ENCODE measurements at regions of chr5 and their contacts with region 1.

Region 1: DNA sequence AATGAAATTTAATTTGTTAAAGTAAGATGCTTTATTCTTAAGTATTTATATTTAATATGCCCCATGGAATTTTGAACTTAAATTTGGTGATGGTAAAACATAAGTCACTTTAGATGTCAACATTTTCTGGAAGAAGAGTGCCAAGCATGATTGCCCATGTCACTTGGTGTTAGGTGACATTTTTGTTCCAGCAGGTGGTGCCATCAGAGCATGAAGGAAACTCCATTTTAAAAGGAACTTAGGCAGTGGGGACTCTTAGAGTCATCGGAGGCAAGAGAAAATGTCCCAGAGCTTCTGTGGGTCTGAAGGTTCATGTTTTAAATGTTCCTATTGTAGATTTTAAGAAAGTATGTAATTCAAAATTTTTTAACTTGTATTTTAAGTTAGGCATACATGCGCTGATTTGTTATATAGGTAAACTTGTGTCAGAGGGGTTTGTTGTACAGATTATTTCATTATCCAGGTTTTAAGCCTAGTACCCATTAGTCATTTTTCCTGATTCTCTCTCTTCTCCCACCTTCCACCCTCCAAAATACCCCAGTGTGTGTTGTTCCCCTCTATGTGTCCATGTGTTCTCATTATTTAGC is 789.3 kb downstream of the SEMA5A start:
- DNase-seq: no peak
- H3K4me3 ChIP-seq: no peak overlapping the region
- H3K27ac ChIP-seq: no peak overlapping the region
- H3K4me1 ChIP-seq: no peaks in the 10 kb centered on the region
- H3K27me3 ChIP-seq: no peaks in the 10 kb centered on the region
- CTCF ChIP-seq: peak in 1 of 4 experiments; percentile 14
- EP300 ChIP-seq: no peak
- POLR2A ChIP-seq: no peak

Region 2: DNA sequence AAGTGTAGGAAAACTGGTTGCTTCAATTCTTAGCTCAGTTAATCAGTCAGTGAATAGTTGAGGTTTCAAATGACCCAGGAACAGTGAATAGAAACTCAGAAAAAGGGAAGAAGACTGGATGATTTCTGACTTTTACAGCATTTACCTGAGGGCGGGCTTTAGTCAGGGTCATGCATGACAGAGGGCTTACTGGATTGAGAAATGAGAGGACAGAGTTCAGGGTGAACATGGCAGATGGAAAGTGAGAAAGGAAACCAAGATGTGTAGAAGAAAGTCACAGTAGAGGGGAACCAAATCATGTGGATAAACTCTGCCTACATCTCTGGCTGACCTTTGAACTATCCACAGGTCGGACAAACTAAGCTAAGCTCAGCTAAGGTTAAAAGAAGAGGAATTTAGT is 193.3 kb after region 1 on chr5:
- intact Hi-C with region 1: no loop called
- DNase-seq: no peak
- H3K4me3 ChIP-seq: no peak overlapping the region
- H3K27ac ChIP-seq: no peak overlapping the region
- H3K4me1 ChIP-seq: no peaks in the 10 kb centered on the region
- H3K27me3 ChIP-seq: no peaks in the 10 kb centered on the region
- CTCF ChIP-seq: no peak
- EP300 ChIP-seq: no peak
- POLR2A ChIP-seq: no peak

Region 3: DNA sequence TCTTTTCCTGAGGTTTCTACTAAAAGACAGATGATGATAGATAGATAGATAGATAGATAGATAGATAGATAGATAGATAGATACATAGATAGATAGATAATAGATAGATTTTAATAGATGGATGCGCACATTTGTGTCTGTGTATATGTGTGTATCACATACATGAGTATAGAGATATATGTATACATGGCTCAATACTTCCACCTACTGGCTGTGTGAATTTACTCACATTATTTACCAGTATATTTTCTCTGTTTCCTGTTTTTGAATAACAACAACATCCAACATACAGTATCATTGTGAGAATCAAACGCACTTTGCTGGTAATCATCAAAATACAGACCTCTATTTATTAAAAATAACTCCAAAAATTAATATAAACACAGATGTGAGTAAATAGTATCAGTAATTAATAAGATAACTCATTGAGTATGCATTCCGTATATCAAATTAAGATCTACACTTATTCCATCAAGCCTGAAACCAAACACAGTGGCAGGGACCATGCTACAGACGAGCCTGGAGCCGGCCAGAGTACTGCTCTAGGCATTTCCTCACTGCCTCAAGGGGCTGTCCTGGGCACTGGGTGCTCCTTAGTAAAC is 451.3 kb after region 1 on chr5:
- intact Hi-C with region 1: loop called (anchors 5 kb)
- DNase-seq: no peak
- H3K4me3 ChIP-seq: no peak overlapping the region
- H3K27ac ChIP-seq: no peak overlapping the region
- H3K4me1 ChIP-seq: no peaks in the 10 kb centered on the region
- H3K27me3 ChIP-seq: no peaks in the 10 kb centered on the region
- CTCF ChIP-seq: peak in 2 of 4 experiments; percentile 23 to 48
- EP300 ChIP-seq: no peak
- POLR2A ChIP-seq: no peak